Colonic mucosa (tissue), 4 donors: ENCODE measurements at regions of chr13 and their contacts with region 1.

Region 1: GRCh38 chr13:30107581-30107992 is 199.8 kb downstream of the KATNAL1 start:
- DNase-seq: no peak
- H3K4me3 ChIP-seq: no peak overlapping the region
- H3K27ac ChIP-seq: no peak overlapping the region
- H3K4me1 ChIP-seq: peaks cover 3% of the 10 kb centered on the region
- H3K27me3 ChIP-seq: no peaks in the 10 kb centered on the region
- CTCF ChIP-seq: no peak

Region 2: DNA sequence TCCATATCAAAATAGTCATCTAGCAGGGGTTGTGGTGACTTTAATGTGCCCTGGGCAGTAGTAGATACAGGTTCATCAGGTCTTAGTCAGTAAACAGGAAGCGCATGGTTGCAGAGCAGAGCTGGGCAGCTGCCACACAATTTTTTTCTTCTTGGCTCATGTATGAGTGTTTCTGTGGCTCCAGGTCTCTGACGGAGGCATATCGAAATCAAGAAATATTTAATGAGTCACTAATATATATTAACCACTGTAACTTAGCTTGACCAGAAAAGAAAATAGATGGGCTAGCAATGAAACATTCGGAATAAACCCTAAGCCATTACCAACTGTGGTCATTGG is 188.7 kb before region 1 on chr13:
- intact Hi-C with region 1: no loop called
- DNase-seq: no peak
- H3K4me3 ChIP-seq: no peak overlapping the region
- H3K27ac ChIP-seq: no peak overlapping the region
- H3K4me1 ChIP-seq: peaks cover 9% of the 10 kb centered on the region
- H3K27me3 ChIP-seq: no peaks in the 10 kb centered on the region
- CTCF ChIP-seq: no peak

Region 3: DNA sequence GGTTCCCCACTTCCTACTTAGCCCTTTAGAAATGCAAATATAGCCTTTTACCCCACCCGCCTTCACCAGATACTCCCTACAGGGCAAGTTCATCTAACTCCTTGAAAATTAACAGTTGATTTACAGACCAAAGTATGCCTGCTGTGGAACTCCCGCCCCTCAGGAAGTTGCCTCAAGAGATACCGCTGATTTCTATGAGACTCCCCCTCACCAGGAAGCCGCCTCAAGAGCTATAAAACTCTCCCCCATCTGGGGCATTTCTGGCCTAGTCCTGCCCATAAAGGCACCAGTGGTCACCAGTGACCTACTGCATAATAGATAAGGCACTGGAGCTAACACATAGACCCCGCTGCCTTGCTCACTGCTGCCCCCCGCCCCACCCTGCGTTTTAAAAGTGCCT is 55.5 kb before region 1 on chr13:
- intact Hi-C with region 1: loop called (anchors 10 kb)
- DNase-seq: no peak
- H3K4me3 ChIP-seq: no peak overlapping the region
- H3K27ac ChIP-seq: no peak overlapping the region
- H3K4me1 ChIP-seq: no peaks in the 10 kb centered on the region
- H3K27me3 ChIP-seq: no peaks in the 10 kb centered on the region
- CTCF ChIP-seq: no peak